Sciatic nerve (tissue), 2 donors: ENCODE measurements at regions of chr2 and their contacts with region 1.

Region 1: DNA sequence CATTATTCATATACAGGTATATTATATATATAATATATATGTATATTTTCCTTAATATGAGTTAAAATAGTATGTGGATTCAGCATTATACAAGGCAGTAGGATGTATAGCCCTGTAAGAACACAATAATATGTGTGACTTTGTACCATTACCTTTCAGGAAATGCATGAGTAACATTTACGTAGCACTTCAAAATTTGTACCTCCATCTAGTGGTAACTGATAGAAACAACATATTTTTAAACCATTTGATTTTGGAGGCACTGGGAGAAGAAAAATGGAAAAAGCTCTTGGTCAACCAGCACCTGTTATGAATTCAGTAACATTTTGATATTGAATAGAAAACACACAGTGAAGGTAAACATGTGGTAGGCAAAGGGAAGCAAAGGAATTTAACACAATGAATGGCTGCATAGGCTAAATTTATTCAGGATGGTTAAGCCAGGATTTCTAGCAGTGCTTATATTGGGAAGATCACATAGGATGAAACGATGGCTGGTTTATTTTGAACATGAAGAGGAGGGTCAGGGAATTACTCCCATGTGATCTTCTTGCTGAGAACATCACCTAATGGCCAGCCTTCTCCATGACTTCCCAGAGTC is 565.5 kb downstream of the CCDC85A start:
- DNase-seq: no peak
- ATAC-seq: no peak

Region 2: GRCh38 chr2:56183643-56184499 is 565.4 kb before region 1 on chr2 and contains the start of gene CCDC85A:
- intact Hi-C with region 1: loop called (anchors 10 kb)
- DNase-seq: peak; percentile 90
- ATAC-seq: peak; percentile 94
- total RNA-seq, gene CCDC85A: 3.9 TPM

Region 3: DNA sequence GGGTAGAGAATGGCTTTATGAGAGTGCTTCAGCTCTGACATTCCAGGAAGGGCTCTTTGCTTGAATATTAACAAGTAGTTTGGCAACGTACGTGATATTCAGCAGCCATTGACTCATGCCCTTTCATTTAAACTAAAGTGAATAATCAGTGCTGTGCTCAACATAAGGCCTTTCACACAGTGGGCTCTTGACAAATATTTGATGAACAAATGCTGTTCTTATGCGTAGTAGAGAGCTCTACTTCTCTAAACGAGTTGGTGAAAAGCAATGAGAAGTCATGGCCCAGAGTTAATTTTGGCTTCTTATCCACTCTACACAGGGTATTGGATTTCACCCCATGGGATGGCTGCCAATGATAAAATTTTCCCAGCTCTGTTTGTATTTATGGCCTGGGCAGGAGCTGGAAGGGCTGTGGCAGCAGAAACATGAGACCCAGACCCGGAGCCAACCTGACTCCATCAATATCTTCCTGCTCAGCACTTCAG is 226.6 kb before region 1 on chr2:
- intact Hi-C with region 1: no loop called
- DNase-seq: no peak
- ATAC-seq: peak; percentile 28

Region 4: DNA sequence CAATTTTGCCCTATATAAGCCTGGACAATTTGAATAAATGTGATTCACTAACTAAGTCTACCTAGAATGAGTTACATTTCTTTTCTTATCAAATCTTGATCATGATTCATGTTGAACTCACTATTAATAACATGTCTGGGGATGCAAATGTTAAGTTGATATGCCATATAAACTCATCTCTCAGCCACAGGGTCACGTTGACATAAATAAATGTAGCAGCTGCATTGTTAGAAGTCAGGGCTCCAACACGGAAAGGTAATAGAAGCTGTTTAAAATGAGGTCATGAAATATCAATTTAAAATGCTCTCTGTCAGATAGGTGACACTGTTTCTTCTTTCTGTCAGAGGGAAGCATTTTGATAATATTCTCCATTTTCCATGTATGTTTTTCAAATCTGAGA is 43.5 kb before region 1 on chr2:
- intact Hi-C with region 1: no loop called
- DNase-seq: no peak
- ATAC-seq: no peak

Region 5: GRCh38 chr2:56801770-56802169 is 52.5 kb after region 1 on chr2:
- intact Hi-C with region 1: no loop called
- DNase-seq: no peak
- ATAC-seq: no peak